Posterior cingulate gyrus (tissue), 11 donors: ENCODE measurements at regions of chr2 and their contacts with region 1.

Region 1: DNA sequence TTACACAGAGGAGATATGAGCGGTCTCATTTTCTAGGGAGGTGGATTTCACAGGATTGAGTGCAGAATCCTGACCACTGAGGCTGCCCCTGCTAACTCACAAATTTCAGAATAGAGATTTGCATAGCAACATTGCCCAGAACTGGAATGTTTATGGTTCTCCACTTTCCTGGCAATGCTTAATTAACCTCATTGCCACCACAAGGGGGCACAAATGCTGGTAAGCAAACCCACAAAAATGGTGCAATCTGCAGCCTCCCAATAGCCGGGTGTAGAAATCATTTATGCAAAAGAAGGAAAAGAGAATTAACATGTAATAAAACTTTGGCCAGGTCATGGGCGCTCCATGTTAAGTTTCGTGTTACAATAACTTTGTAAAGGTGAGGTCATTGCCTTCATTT is 112.4 kb downstream of the CYRIA start:
- DNase-seq: peak in 6 of 10 donors; percentile 14 to 82 (median 36)

Region 2: DNA sequence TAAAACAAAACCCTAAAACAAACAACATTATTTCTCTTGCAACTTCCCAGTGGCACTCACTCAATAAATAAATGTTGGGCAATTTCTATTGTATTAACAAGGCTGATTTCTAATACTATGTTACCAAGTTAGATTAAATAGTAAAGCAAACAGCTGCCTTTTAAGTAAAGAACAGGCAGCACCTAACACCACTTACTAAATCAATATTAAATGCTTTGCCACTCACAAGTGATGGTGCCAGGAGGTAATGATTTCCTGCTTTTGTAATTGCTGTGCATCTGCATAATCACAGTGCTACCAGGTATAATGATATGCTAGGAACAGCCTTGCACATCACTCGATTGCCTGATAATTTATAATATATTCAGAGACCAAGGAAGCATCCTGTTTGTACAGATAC is 1268.6 kb before region 1 on chr2:
- intact Hi-C with region 1: loop called (anchors 10 kb)
- DNase-seq: no peak

Region 3: GRCh38 chr2:16438613-16439321 is 114.5 kb before region 1 on chr2:
- intact Hi-C with region 1: no loop called
- DNase-seq: no peak

Region 4: GRCh38 chr2:16608661-16609643 is 55.7 kb after region 1 on chr2:
- intact Hi-C with region 1: loop called (anchors 1 kb)
- DNase-seq: peak; percentile 70 to 98 (median 90)

Region 5: DNA sequence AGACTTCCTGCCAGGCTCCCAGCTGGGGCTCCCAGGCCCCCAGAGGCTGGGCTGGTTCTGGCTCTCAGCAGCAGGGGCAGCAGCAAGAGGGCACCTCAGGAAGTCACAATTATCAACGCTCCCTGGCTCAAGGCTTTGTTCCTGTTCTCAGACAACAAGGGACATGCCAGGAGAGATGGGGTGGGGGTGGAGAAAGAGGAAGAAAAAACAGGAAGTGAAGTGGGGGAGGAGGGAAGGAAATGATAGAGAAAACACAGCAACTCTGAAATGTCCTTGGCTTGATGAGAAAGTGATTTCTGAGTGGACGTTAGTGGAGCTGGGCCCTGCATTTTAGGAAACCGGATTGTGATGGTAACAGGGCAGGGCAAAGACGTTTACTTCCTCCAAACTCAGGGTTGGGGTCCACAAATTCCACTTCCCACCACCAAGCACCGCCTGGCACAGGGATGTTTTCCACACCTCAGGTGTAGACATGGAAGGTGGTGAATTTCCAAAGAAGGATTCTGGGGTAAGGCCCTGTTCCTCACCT is 72.0 kb after region 1 on chr2:
- intact Hi-C with region 1: no loop called
- DNase-seq: peak in 1 of 10 donors; percentile 74

Region 6: GRCh38 chr2:16756831-16757644 is 203.8 kb after region 1 on chr2:
- intact Hi-C with region 1: loop called (anchors 2 kb)
- DNase-seq: peak; percentile 77 to 98 (median 88)

Region 7: GRCh38 chr2:16840496-16841172 is 287.4 kb after region 1 on chr2:
- intact Hi-C with region 1: no loop called
- DNase-seq: peak in 4 of 10 donors; percentile 14 to 82 (median 46)